ENCODE measurements at regions of chr20 and their contacts with region 1.

Region 1: DNA sequence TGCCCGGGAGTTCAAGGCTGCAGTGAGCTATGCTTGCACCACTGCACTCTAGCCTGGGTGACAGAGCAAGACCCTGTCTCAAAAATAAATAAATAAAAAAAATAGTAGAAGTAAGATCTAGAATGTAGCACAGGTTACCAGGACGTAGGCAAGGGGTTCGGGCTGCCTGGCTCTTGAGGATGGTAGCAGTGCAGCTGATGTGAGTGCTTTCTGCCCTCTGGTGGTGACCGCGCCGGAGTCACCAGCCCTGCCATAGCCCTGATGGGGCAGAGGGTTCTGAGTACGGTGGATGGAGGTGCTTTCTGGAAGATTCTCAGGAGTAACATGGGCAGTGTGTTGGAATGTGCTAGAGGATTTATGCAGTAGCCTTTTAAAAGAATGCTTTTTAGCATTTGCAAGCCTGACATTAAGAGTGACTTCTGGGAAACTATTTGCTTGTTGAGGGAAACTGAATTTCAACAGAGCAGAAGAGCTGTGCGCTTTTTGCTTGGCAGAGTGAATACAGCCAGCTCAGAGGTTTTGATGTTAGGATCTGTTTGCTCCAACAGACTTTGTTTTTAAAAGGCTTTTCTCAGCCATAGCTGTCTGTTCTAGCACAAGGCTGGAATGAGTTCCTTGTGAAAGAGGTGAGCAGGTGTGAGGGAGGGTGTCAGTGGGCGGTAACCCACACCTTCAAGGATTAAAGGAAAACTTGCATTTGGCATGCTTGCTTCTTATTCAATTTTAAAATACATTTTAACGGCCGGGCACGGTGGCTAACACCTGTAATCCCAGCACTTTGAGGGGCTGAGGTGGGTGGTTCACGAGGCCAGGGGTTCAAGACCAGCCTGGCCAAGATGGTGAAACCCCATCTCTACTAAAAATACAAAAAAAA is 65.9 kb downstream of the PTPN1 start:
- DNase-seq: peak; percentile 69 to 81 (median 81)
- H3K4me3 ChIP-seq: no peak overlapping the region
- H3K27ac ChIP-seq: no peak overlapping the region
- H3K4me1 ChIP-seq: peaks cover 5 to 40% (median 26%) of the 10 kb centered on the region in 4 experiments
- H3K27me3 ChIP-seq: no peaks in the 10 kb centered on the region

Region 2: DNA sequence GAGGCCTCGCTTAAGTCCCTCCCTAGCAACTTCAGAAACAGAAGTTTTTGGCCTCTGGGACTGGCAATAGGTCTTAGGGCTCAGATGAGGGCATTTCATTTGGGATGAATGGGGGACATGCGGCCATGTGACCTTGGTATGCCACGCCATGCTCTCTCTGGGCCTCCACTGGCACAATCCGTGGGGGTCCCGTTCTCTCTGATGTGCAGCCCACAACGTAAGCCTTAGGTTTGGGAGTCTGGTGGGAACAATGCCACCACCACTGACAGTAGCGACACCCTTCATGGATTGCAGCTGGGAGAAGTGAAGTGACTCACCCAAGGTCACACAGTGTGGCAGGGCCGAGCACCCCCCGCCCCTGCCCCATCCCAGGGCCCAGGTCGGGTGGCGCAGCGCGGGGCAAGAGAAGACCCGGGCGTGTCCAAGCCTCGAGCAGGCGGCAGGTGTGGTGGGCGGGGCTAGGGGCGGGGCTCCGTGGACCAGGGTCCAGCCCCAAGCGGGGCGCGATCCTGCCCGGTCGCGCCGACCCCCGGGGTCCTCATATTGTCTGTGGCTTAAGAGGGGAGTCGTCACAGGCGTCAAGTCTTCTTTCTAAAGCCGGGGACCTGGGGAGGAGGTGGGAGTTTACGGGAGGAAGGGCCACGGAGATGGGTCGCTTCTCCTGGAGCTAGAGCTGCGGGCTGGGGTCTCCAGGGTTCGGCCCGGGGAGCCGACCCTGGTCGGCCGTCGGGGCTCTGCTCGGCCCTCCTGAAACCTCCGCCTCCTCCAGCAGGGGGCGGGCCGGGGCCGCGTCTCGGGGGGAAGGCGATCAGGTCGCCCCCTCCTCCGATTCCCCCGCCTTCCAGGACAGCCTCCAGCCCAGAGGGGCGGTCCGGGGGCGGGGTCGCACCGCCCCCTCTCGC is 386.2 kb before region 1 on chr20:
- CTCF ChIA-PET with region 1: interaction called, 60 read pairs
- POLR2A ChIA-PET with region 1: no interaction called
- DNase-seq: peak; percentile 83 to 91 (median 90)
- H3K4me3 ChIP-seq: peak overlapping the region in 6 of 7 experiments; percentile 79 to 91 (median 86)
- H3K27ac ChIP-seq: peak overlapping the region; percentile 61 to 91
- H3K4me1 ChIP-seq: peaks cover 2 to 48% (median 38%) of the 10 kb centered on the region in 4 experiments
- H3K27me3 ChIP-seq: no peaks in the 10 kb centered on the region

Region 3: DNA sequence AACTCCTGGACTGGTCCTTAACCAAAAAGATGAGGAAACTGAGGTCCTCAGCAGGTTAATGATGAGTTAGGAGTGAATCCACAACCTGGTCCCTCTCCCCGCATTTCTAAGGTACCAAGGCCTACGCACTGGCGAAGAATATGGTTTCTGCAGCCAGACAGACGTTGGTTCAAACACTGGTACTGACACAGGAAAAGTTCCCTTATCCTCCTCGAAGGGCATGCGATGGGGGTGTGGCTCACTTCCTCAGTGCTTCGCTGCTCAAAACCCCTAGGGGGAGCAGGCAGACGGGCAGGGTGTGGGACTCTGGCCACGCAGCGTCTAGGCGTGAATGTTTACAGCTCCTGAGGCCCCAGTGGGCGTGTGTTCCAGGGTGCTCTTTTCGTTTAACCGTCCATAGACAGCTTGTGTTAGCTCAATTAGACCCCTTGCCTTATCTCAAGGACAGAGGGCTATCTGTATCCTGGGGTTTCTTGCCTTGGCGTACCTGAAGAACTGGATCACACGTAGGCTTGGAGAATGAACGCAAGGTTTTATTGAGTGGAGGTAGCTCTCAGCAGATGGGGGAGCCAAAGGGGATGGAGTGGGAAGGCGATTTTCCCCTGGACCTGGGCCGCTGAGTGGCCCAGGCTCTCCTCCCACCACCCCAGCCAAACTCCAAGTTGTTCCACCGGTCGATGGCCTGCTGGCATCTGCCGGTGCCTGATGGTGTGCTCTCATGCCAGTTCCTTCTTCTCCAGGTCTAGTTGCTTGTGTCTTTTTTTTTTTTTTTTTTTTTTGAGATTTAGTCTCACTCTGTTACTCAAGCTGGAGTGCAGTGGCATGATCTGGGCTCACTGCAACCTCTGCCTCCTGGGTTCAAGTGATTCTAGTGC is 97.7 kb before region 1 on chr20:
- CTCF ChIA-PET with region 1: interaction called, 149 read pairs
- POLR2A ChIA-PET with region 1: interaction called, 4 read pairs
- DNase-seq: peak; percentile 79 to 90 (median 89)
- H3K4me3 ChIP-seq: no peak overlapping the region
- H3K27ac ChIP-seq: no peak overlapping the region
- H3K4me1 ChIP-seq: peaks cover under 1 to 21% (median 20%) of the 10 kb centered on the region in 4 experiments
- H3K27me3 ChIP-seq: no peaks in the 10 kb centered on the region

Region 4: GRCh38 chr20:50504231-50504823 is 71.8 kb before region 1 on chr20:
- CTCF ChIA-PET with region 1: interaction called, 906 read pairs
- POLR2A ChIA-PET with region 1: no interaction called
- DNase-seq: no peak
- H3K4me3 ChIP-seq: peak overlapping the region in 1 of 7 experiments; percentile 21
- H3K27ac ChIP-seq: peak overlapping the region in 1 of 2 experiments; percentile 5
- H3K4me1 ChIP-seq: peaks cover 3 to 32% (median 8%) of the 10 kb centered on the region in 4 experiments
- H3K27me3 ChIP-seq: no peaks in the 10 kb centered on the region

Region 5: GRCh38 chr20:50551288-50551687 is 24.8 kb before region 1 on chr20:
- CTCF ChIA-PET with region 1: interaction called, 21 read pairs
- POLR2A ChIA-PET with region 1: no interaction called
- DNase-seq: no peak
- H3K4me3 ChIP-seq: no peak overlapping the region
- H3K27ac ChIP-seq: no peak overlapping the region
- H3K4me1 ChIP-seq: peaks cover 5 to 57% (median 33%) of the 10 kb centered on the region in 4 experiments
- H3K27me3 ChIP-seq: no peaks in the 10 kb centered on the region

Region 6: DNA sequence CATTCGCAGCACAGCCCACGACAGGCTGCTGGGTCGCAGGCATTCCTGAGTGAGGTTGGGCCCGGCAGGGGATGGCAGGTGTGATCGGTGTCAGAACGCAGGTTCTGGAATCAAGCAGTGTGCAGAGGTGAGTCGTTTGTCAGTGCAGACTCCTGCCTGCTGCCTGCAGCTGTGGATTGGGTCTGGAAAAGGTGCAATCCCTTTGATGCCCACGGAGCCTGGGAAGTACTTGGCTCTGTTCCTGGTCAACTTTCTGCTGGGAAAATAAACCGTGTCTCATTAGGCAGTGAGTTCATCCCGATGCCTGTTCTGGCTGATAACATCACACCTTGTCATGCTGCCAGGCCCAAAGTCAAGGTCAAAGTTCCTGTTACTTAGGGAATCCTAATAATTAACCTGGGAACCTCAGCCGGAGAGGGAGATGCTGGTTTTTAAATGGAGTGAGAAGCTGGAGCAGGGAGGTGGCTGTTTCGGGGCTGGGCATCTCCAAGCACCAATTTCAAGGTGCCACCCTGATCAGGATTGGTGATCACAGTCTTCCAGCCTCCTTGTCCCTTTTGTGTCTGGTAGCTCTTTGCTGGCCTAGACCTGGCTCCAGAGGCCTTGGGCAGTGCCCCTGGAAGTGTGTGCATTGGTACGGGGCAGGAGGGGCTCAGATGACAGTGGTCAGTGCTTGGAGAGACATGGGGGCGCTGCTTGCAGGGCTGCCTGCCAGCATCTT is 280.1 kb after region 1 on chr20:
- CTCF ChIA-PET with region 1: no interaction called
- POLR2A ChIA-PET with region 1: no interaction called
- DNase-seq: no peak
- H3K4me3 ChIP-seq: no peak overlapping the region
- H3K27ac ChIP-seq: no peak overlapping the region
- H3K4me1 ChIP-seq: peaks cover 0 to 10% (median 8%) of the 10 kb centered on the region in 4 experiments
- H3K27me3 ChIP-seq: no peaks in the 10 kb centered on the region

Measured in common myeloid progenitor, CD34-positive (primary cell).